ENCODE measurements at regions of chr2 and their contacts with region 1.

Region 1: DNA sequence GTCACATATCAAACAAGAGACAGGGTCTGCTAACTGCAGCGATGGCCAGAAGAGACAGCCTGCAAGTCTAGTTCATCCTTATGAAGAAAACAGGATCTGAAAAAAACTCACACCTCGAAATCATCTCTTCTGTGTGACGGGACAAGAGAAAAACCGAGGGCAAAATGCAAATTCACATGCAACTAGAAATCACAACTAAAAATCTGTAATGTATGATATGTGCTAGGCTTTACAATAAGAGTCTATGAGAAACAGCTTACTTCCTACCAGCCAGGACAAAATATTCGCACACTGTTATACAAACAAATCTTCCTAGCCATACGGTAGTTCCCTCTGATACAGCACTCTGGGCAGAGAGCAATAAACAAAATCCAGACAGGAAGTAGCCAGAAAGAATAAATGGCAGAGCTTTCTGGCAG is 48.8 kb downstream of the ANKRD44 start:
- DNase-seq: peak in 1 of 5 donors; percentile 33
- H3K4me3 ChIP-seq: no peak overlapping the region
- H3K4me3 Mint-ChIP-seq: peak overlapping the region; percentile 43 to 82 (median 64)
- H3K27ac ChIP-seq: peak overlapping the region; percentile 65
- H3K27ac Mint-ChIP-seq: peak overlapping the region; percentile 76 to 98 (median 91)
- H3K4me1 ChIP-seq: peaks cover 87% of the 10 kb centered on the region
- H3K4me1 Mint-ChIP-seq: peaks cover 65 to 91% (median 77%) of the 10 kb centered on the region in 4 donors
- H3K27me3 ChIP-seq: no peaks in the 10 kb centered on the region
- H3K27me3 Mint-ChIP-seq: no peaks in the 10 kb centered on the region

Region 2: GRCh38 chr2:197239434-197239833 is 22.4 kb before region 1 on chr2:
- CTCF ChIA-PET with region 1: interaction called, 5 read pairs
- POLR2A ChIA-PET with region 1: interaction called, 13 read pairs
- intact Hi-C with region 1: no loop called
- DNase-seq: no peak
- H3K4me3 ChIP-seq: peak overlapping the region in 1 of 2 donors; percentile 52
- H3K4me3 Mint-ChIP-seq: peak overlapping the region; percentile 80 to 96 (median 87)
- H3K27ac ChIP-seq: peak overlapping the region; percentile 66
- H3K27ac Mint-ChIP-seq: peak overlapping the region; percentile 87 to 99 (median 95)
- H3K4me1 ChIP-seq: peaks cover 97% of the 10 kb centered on the region
- H3K4me1 Mint-ChIP-seq: peaks cover 70 to 93% (median 78%) of the 10 kb centered on the region in 4 donors
- H3K27me3 ChIP-seq: no peaks in the 10 kb centered on the region
- H3K27me3 Mint-ChIP-seq: no peaks in the 10 kb centered on the region

Measured in CD4-positive, alpha-beta memory T cell (primary cell).